Heart left ventricle (tissue), 16 donors: ENCODE measurements at regions of chr22 and their contacts with region 1.

Region 1: DNA sequence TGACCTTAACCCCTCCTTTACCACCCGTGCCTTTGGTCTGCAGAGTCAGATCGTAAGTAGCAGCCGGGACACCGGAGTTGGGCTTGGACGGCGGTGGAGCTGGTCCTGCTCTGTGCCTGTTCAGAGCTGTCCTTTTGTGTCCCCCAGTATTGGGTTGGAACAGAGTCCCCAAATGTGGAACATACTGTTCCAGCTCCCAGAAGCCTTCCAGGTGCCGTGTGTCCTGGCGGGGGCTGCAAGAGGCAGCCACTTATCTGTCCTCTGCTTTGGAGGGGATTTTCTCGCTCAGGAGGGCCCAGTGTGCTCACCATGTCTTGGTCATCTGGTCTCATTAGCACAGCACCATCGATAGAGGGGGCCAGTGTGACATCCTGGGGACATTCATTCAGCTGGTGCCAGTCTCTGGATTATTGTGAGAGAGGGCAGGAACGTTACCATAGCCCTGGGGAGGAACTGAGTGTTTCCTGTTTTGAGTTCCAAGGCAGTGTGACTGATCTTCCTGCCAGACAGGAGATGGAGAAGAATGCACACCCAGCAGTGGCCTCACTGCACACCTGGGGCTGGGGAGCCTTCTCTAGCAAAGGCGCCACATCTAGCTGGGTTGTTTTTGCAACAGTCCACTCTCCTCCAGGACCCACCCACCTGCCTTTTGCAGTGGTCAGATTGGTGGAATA is 12.4 kb downstream of the CRELD2 start:
- DNase-seq: peak in 4 of 5 donors; percentile 75 to 81 (median 78)
- ATAC-seq: peak; percentile 26 to 71 (median 49)
- H3K4me3 ChIP-seq: no peak overlapping the region
- H3K27ac ChIP-seq: peak overlapping the region in 9 of 12 donors; percentile 4 to 69 (median 32)
- H3K4me1 ChIP-seq: peaks cover 7 to 61% (median 42%) of the 10 kb centered on the region in 12 donors
- H3K27me3 ChIP-seq: peaks cover 0 to 9% (median 5%) of the 10 kb centered on the region in 9 donors
- CTCF ChIP-seq: peak; percentile 67 to 86 (median 72)
- POLR2A ChIP-seq: no peak

Region 2: DNA sequence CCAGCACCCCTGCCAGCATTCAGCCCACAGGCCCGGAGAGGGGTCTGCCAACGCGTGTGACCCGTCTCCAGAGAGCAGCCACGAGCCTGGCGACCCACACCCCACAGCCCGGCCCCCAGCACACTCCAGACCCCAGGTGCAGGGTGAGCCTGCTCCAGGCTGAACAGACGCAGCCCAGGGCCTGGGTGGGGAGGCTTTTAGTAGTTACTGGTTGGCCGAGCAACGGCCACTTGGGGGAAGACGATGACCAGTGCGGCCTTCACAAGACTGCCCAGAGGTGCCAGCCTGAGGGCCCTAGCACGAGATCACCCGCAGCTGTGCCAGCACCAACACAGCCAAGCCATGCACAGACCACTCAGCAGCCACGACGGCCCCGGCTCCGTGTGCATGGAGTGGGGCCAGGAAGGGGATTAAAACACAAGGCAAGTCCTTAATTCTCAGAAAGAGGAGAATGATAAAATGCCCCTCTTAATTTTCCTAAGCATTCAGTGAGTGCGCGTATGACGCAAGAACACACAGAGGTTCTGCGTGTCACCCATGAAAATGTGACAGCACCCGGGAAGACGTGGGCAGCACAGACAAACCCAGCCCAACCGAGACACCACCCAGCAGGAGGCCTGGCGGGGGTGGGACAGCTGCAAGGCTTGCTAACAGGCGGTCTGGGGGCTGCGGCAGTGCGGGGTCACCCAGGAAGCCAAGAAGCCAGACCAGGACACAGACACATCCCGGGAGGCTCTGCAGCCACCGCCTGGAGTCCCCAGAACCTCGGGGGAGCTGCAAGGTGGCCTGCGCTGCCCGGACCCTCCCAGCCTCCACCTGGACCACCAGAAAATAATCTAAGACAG is 150.8 kb before region 1 on chr22:
- intact Hi-C with region 1: loop called in 2 of 10 experiments (anchors 10 kb)
- DNase-seq: peak in 2 of 5 donors; percentile 37 to 66
- ATAC-seq: peak; percentile 50 to 65 (median 52)
- H3K4me3 ChIP-seq: no peak overlapping the region
- H3K27ac ChIP-seq: no peak overlapping the region
- H3K4me1 ChIP-seq: peaks cover 2 to 28% (median 14%) of the 10 kb centered on the region in 12 donors
- H3K27me3 ChIP-seq: no peaks in the 10 kb centered on the region
- CTCF ChIP-seq: no peak
- POLR2A ChIP-seq: no peak

Region 3: GRCh38 chr22:49970528-49971231 is 39.8 kb after region 1 on chr22:
- intact Hi-C with region 1: loop called in 7 of 10 experiments (anchors 2 to 5 kb)
- DNase-seq: peak; percentile 90 to 99 (median 95)
- ATAC-seq: peak; percentile 90 to 95 (median 91)
- H3K4me3 ChIP-seq: peak overlapping the region; percentile 22 to 65 (median 54)
- H3K27ac ChIP-seq: peak overlapping the region; percentile 49 to 99 (median 91)
- H3K4me1 ChIP-seq: peaks cover 8 to 67% (median 47%) of the 10 kb centered on the region in 12 donors
- H3K27me3 ChIP-seq: no peaks in the 10 kb centered on the region
- CTCF ChIP-seq: no peak
- POLR2A ChIP-seq: peak in 1 of 2 donors; percentile 88

Region 4: DNA sequence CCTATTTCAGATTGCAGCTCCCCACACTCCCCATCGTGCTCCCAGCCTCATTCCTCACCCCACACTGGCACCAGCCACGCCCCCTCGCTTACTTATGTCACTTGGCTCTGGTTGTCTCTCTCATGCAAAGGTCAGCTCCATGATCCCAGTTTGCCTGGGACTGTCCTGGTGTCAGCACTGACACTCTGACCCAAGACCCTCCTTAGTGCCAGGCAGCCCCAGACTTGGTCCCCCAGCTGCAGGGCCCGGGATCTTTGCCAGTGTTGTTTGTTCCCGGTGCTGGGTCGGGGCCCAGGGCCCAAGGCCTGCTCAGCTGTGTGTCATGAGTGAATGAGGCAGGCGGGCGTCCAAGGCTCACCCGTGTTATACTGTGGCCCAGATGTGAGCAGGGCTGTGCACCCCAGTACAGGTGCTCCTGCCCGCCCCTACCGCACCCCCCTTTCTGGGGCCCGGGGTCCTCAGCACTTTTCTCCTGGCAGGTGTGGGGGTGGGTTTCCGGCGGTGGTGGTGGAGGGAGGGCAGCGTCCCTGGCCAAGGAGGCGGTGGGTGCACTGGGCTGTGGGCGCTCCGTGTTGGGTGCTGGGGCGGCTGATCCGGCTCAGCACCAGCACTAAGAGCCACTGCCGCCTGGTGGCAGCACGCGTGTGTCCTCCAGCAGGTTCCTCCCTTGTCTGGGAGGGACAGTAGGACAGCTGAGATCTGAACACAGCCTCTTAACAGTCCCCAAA is 62.2 kb after region 1 on chr22:
- intact Hi-C with region 1: loop called in 8 of 10 experiments (anchors 1 to 10 kb)
- DNase-seq: peak in 4 of 5 donors; percentile 63 to 84 (median 70)
- ATAC-seq: peak; percentile 59 to 90 (median 84)
- H3K4me3 ChIP-seq: no peak overlapping the region
- H3K27ac ChIP-seq: no peak overlapping the region
- H3K4me1 ChIP-seq: peaks cover 0 to 8% (median 2%) of the 10 kb centered on the region in 12 donors
- H3K27me3 ChIP-seq: no peaks in the 10 kb centered on the region
- CTCF ChIP-seq: peak; percentile 62 to 81 (median 68)
- POLR2A ChIP-seq: no peak

Region 5: GRCh38 chr22:50129121-50129736 is 198.4 kb after region 1 on chr22:
- intact Hi-C with region 1: no loop called
- DNase-seq: no peak
- ATAC-seq: no peak
- H3K4me3 ChIP-seq: no peak overlapping the region
- H3K27ac ChIP-seq: no peak overlapping the region
- H3K4me1 ChIP-seq: no peaks in the 10 kb centered on the region
- H3K27me3 ChIP-seq: peaks cover 0 to 6% (median 0%) of the 10 kb centered on the region in 9 donors
- CTCF ChIP-seq: no peak
- POLR2A ChIP-seq: no peak

Region 6: DNA sequence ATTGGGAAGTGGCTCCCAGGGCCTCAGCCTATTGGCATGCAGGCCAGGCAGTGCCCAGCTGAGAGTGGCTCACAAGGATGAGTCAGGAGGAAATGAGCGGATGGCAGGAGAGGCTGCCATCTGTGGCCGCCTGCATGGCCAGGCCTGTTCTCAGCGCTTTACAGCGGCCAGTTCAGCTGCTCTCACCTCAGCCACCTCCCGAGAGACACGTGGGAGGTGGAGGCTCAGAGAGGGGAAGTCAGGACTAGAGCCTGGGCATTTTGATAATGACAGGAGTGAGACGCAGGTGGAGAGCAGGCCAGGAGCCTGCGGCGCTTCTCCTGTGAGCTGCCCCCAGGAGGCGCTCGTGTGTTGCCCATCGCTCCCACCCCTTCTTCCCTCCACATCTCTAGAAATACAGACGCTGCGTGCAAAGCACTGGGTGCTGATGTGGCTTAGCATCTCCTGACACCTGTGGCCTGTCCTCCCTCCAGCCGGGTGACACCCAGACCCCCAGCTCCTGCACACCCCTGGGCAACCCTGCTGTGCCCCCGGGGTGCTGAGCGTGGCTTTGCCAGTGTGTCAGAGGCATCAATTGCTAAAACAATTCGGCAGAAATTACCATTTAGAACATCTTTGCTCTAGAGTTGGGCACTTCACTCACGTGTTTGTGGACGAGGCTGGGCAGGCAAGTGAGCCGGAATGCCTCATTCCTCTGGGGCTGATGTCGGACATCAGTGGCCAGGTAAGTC is 218.3 kb after region 1 on chr22:
- intact Hi-C with region 1: loop called in 1 of 10 experiments (anchors 10 kb)
- DNase-seq: peak in 4 of 5 donors; percentile 32 to 77 (median 54)
- ATAC-seq: peak; percentile 19 to 83 (median 78)
- H3K4me3 ChIP-seq: no peak overlapping the region
- H3K27ac ChIP-seq: no peak overlapping the region
- H3K4me1 ChIP-seq: no peaks in the 10 kb centered on the region
- H3K27me3 ChIP-seq: peaks cover 0 to 12% (median 0%) of the 10 kb centered on the region in 9 donors
- CTCF ChIP-seq: peak; percentile 53 to 88 (median 66)
- POLR2A ChIP-seq: no peak

Region 7: GRCh38 chr22:50209893-50210292 is 279.0 kb after region 1 on chr22:
- intact Hi-C with region 1: loop called in 2 of 10 experiments (anchors 5 kb)
- DNase-seq: peak in 3 of 5 donors; percentile 69 to 80 (median 78)
- ATAC-seq: peak in 3 of 4 donors; percentile 23 to 35 (median 29)
- H3K4me3 ChIP-seq: no peak overlapping the region
- H3K27ac ChIP-seq: no peak overlapping the region
- H3K4me1 ChIP-seq: peaks cover 0 to 33% (median 20%) of the 10 kb centered on the region in 12 donors
- H3K27me3 ChIP-seq: no peaks in the 10 kb centered on the region
- CTCF ChIP-seq: peak; percentile 74 to 87 (median 80)
- POLR2A ChIP-seq: no peak